SK-N-SH (cell line): ENCODE measurements at regions of chr2 and their contacts with region 1.

Region 1: DNA sequence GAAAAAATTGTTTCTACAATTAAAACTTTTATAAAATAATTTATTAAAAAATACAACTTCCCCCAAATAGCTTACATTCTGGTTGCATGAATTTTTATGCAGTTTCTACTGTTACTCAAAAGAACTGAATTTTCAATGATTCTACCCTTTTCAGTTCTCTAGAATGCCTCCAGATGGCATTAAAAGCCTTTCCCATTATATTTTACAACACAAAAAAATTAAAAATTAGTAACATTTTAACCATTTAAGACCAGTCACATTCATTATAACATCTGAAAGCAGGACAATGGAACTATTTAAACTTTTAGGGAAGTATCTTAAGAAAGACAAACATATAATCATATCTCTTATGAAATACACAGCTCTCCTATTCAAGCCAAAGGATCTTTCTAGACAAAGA is 236.0 kb upstream of the REV1 start:
- DNase-seq: peak; percentile 19
- H3K4me3 ChIP-seq: no peak overlapping the region
- H3K27ac ChIP-seq: peak overlapping the region in 1 of 2 experiments; percentile 67; a peak in 1 of 4 replicates
- H3K4me1 ChIP-seq: peaks cover 0 to 15% of the 10 kb centered on the region in 2 experiments; a peak in 2 of 4 replicates
- H3K27me3 ChIP-seq: no peaks in the 10 kb centered on the region
- CTCF ChIP-seq: peak; percentile 70
- EP300 ChIP-seq: no peak
- RAD21 ChIP-seq: peak; percentile 65

Region 2: GRCh38 chr2:99710721-99711120 is 15.1 kb before region 1 on chr2:
- CTCF ChIA-PET with region 1: interaction called, 11 read pairs
- POLR2A ChIA-PET with region 1: no interaction called
- DNase-seq: no peak
- H3K4me3 ChIP-seq: no peak overlapping the region
- H3K27ac ChIP-seq: peak overlapping the region in 1 of 2 experiments; percentile 73; a peak in 2 of 4 replicates
- H3K4me1 ChIP-seq: peaks cover 0 to 25% of the 10 kb centered on the region in 2 experiments; a peak in 2 of 4 replicates
- H3K27me3 ChIP-seq: no peaks in the 10 kb centered on the region
- CTCF ChIP-seq: no peak
- EP300 ChIP-seq: no peak
- RAD21 ChIP-seq: no peak

Region 3: DNA sequence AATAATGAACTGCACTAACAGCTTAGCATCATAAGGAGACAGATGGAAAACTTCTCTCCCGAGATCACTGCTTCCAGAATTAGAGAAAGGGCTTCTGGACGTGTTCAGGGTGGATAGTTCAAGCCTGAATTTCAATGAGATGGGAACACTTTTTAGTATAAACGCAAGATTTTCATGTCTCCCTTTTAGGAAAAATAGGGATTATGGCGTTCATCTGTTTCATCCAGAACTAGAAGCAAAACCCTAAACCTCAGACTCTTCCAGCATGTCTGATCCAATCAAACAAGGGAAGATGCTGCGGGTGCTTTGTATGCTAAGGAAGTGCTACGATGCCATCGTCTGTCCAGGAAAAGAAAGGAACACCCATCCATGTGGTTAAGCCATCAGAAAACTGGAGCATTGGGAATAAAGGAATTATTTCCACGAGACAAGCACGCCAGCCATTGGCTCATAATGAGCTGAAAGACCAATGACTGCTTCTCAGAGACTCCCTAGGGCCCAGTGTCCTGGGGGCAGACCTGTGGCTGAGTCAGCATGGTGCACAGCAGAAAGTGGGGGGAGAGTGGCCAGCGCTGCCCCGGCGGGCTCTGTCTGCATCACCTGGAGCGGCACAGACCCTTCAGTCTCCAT is 482.4 kb after region 1 on chr2:
- CTCF ChIA-PET with region 1: interaction called, 12 read pairs
- POLR2A ChIA-PET with region 1: no interaction called
- DNase-seq: peak; percentile 38
- H3K4me3 ChIP-seq: no peak overlapping the region
- H3K27ac ChIP-seq: peak overlapping the region in 1 of 2 experiments; percentile 78; a peak in 2 of 4 replicates
- H3K4me1 ChIP-seq: peaks cover 0 to 47% of the 10 kb centered on the region in 2 experiments; a peak in 2 of 4 replicates
- H3K27me3 ChIP-seq: no peaks in the 10 kb centered on the region
- CTCF ChIP-seq: no peak
- EP300 ChIP-seq: no peak
- RAD21 ChIP-seq: peak; percentile 72